ENCODE measurements at regions of chr11 and their contacts with region 1.

Region 1: DNA sequence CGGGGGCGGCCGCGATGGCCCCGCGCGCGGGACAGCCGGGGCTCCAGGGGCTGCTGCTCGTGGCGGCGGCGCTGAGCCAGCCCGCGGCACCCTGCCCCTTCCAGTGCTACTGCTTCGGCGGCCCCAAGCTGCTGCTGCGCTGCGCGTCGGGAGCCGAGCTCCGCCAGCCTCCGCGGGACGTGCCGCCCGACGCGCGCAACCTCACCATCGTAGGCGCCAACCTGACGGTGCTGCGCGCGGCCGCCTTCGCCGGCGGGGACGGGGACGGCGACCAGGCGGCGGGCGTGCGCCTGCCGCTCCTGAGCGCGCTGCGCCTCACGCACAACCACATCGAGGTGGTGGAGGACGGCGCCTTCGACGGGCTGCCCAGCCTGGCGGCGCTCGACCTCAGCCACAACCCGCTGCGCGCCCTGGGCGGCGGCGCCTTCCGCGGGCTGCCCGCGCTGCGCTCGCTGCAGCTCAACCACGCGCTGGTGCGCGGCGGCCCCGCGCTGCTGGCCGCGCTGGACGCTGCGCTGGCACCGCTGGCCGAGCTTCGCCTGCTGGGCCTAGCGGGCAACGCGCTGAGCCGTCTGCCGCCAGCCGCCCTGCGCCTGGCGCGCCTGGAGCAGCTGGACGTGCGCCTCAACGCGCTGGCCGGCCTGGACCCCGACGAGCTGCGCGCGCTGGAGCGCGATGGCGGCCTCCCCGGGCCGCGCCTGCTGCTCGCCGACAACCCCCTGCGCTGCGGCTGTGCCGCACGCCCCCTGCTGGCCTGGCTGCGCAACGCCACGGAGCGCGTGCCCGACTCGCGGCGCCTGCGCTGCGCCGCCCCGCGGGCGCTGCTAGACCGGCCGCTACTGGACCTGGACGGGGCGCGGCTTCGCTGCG is 697 bp downstream of the TPBGL start:
- DNase-seq: peak; percentile 71 to 95 (median 86)
- ATAC-seq: peak; percentile 98
- H3K4me3 ChIP-seq: peak overlapping the region; percentile 54
- H3K4me3 Mint-ChIP-seq: peak overlapping the region; percentile 59 to 85 (median 75)
- H3K27ac ChIP-seq: no peak overlapping the region
- H3K27ac Mint-ChIP-seq: no peak overlapping the region
- H3K4me1 ChIP-seq: peaks cover 5 to 15% of the 10 kb centered on the region in 2 donors
- H3K4me1 Mint-ChIP-seq: peaks cover 0 to 14% (median 10%) of the 10 kb centered on the region in 7 donors
- H3K27me3 ChIP-seq: peaks cover 3 to 5% of the 10 kb centered on the region in 2 donors
- H3K27me3 Mint-ChIP-seq: peaks cover 13 to 68% (median 27%) of the 10 kb centered on the region in 5 donors

Region 2: DNA sequence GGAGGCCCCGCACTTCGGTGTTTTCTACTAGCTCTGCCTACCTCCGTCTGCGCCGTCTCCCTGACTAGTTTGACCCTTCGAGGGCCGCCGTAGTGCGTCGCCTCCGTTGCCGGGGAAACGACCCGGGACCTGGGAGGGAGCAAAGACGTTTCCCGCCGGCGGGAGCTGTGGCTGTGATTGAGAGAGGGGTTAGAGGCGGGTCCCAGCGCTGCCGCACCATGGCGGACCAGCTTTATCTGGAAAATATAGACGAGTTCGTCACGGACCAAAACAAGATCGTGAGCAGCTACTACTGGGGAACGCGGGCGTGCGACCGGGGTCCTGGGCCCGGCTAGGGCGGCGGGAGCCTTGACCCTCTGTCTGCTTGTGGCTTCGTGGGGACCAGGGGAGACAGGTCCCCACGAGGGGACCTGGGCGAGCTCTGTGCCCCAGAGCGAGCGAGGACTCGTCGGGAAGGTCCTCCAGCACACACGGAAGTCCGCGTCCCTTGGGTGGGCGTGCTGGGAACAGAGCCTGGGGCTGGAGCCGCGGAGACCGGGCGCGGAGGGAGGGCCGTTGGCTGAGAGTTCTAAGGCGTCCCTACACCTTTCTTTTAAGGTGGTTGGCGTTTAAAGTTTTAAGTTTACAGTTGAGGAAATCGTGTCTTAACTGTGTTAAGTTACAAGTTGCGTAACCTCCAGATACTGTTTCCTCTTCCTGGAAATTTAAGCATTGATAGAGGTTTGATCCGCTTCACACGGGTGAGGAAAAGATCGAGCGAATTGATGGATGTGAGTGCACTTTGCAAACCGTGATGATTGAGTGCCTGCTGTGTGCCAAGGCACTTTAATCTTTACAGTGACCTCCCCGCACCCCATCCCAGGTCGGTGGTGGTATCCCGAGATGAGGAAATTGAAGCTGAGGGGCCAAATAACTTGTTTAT is 648.6 kb before region 1 on chr11 and contains the start of gene POLD3:
- CTCF ChIA-PET with region 1: no interaction called
- POLR2A ChIA-PET with region 1: no interaction called
- intact Hi-C with region 1: loop called in 1 of 2 experiments (anchors 10 kb)
- DNase-seq: peak; percentile 83 to 97 (median 94)
- ATAC-seq: peak; percentile 99
- H3K4me3 ChIP-seq: peak within 1 kb of the TSS; percentile 98
- H3K4me3 Mint-ChIP-seq: peak within 1 kb of the TSS; percentile 90 to 100 (median 92)
- H3K27ac ChIP-seq: peak within 1 kb of the TSS; percentile 96
- H3K27ac Mint-ChIP-seq: peak within 1 kb of the TSS; percentile 90 to 99 (median 95)
- H3K4me1 ChIP-seq: peaks cover 9% of the 10 kb centered on the region in 2 donors
- H3K4me1 Mint-ChIP-seq: peaks cover 7 to 33% (median 27%) of the 10 kb centered on the region in 7 donors
- H3K27me3 ChIP-seq: no peaks in the 10 kb centered on the region
- H3K27me3 Mint-ChIP-seq: peaks cover 0 to 5% (median 0%) of the 10 kb centered on the region in 5 donors
- total RNA-seq, gene POLD3: 8.0 to 40.8 (median 14.7) TPM

Region 3: GRCh38 chr11:74748211-74749127 is 492.8 kb before region 1 on chr11 and contains the start of gene RNF169:
- CTCF ChIA-PET with region 1: no interaction called
- POLR2A ChIA-PET with region 1: no interaction called
- intact Hi-C with region 1: loop called in 1 of 2 experiments (anchors 10 kb)
- DNase-seq: peak; percentile 59 to 88 (median 84)
- ATAC-seq: peak; percentile 100
- H3K4me3 ChIP-seq: peak within 1 kb of the TSS; percentile 73
- H3K4me3 Mint-ChIP-seq: peak within 1 kb of the TSS; percentile 81 to 99 (median 94)
- H3K27ac ChIP-seq: peak within 1 kb of the TSS; percentile 79
- H3K27ac Mint-ChIP-seq: peak within 1 kb of the TSS; percentile 84 to 97 (median 91)
- H3K4me1 ChIP-seq: peaks cover 16 to 29% of the 10 kb centered on the region in 2 donors
- H3K4me1 Mint-ChIP-seq: peaks cover 25 to 48% (median 42%) of the 10 kb centered on the region in 7 donors
- H3K27me3 ChIP-seq: no peaks in the 10 kb centered on the region
- H3K27me3 Mint-ChIP-seq: no peaks in the 10 kb centered on the region
- total RNA-seq, gene RNF169: 17.9 to 25.5 (median 22.2) TPM

Region 4: DNA sequence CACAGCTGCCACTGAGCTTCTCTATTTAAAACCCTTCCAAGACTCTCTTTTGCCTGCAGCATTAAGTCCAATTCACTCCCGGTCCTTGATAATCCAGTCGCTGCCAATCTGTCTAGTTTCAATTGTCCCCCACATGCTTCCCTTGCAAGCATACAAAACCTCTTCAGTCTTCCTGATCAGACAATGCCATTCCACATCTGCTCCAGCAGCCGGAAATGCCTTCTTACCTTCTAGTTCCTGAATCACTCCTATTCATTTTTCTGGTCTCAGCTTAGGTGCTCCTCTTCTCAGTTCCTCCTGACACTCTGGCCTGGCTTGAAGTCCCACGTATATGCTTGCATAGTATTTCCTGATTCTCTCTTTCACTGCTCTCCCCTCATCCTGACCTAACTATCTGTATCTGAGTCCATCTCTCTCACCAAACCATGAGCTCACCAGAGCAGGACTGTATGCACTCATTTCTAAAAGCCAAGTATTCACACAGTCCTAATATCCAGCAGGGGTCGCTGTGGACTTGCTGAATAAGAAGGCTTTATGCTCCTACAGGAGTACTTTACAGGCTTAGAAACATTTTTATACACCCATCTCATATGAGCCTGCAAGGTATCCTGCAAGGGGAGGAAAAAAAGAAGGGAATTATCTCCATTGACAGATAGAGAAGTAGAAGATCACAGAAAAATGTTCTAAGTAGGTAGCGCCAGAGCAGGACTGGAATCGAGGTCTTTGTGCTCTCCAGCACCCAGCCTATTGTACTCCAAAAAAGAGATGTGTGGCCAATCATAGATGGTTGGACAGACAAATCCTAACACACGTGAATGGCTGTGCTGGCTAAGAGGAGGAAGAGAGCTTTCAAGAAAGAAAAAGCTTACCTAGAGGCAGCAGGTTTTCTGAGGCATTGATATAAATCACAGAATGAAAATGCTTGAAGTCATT is 311.6 kb before region 1 on chr11:
- CTCF ChIA-PET with region 1: interaction called, 13 read pairs
- POLR2A ChIA-PET with region 1: no interaction called
- intact Hi-C with region 1: loop called in 1 of 2 experiments (anchors 2 kb)
- DNase-seq: peak; percentile 9 to 74 (median 59)
- ATAC-seq: peak; percentile 92
- H3K4me3 ChIP-seq: no peak overlapping the region
- H3K4me3 Mint-ChIP-seq: no peak overlapping the region
- H3K27ac ChIP-seq: no peak overlapping the region
- H3K27ac Mint-ChIP-seq: no peak overlapping the region
- H3K4me1 ChIP-seq: no peaks in the 10 kb centered on the region
- H3K4me1 Mint-ChIP-seq: peaks cover 0 to 36% (median 0%) of the 10 kb centered on the region in 7 donors
- H3K27me3 ChIP-seq: no peaks in the 10 kb centered on the region
- H3K27me3 Mint-ChIP-seq: no peaks in the 10 kb centered on the region

Region 5: DNA sequence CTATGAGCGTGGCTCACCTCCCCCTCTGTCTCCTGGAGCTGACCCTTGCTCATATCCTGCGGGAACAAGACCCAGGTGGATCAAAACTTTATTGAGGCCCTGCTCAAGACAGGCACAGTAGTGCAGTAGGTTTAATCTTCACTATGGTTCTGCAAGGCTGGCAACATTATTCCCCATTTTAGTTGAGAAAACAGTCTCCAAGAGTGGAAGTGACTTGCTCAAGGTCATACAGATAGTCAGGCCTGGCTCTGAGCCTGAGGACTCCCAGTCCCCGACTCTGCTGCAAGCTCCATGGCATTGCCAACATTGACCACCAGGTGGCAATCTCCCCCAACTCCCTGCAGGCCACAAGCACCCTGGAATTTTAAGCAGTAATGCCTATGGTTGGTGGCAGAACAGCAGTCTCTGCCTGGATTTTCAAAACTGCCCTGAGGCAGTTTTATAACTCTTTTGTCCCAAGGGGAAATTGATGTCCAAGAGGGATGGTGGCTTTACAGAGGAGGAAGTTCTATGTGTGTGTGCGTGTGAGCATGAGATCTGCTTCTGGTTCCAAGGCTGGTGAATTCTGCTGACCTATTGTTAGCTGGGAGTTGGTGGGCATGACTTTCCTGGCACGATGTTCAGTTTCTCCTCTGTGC is 218.4 kb before region 1 on chr11:
- CTCF ChIA-PET with region 1: interaction called, 4 read pairs
- POLR2A ChIA-PET with region 1: no interaction called
- intact Hi-C with region 1: loop called (anchors 2 kb)
- DNase-seq: peak; percentile 38 to 71 (median 66)
- ATAC-seq: peak; percentile 88
- H3K4me3 ChIP-seq: no peak overlapping the region
- H3K4me3 Mint-ChIP-seq: no peak overlapping the region
- H3K27ac ChIP-seq: no peak overlapping the region
- H3K27ac Mint-ChIP-seq: no peak overlapping the region
- H3K4me1 ChIP-seq: no peaks in the 10 kb centered on the region
- H3K4me1 Mint-ChIP-seq: no peaks in the 10 kb centered on the region
- H3K27me3 ChIP-seq: no peaks in the 10 kb centered on the region
- H3K27me3 Mint-ChIP-seq: no peaks in the 10 kb centered on the region

Region 6: DNA sequence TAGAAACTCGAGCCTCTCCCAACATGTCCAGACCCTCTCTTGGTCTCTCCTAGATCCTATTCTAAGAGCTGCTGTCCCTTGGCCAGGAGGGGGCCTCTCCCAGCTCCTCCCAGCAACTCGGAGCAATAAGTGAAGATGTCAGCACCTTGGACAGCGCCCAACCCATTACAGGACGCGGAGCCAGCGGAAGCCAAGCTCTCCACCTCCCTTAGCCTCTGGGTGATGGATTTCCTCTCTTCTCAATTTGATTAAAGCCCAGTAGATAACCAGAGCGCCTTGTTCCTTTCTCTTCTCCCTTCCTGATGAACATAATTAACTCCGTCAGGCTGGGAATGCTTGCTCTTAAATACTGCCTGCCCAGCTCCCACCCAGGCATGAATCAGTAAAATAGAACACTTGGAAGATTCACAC is 26.9 kb before region 1 on chr11:
- CTCF ChIA-PET with region 1: interaction called, 3 read pairs
- POLR2A ChIA-PET with region 1: no interaction called
- intact Hi-C with region 1: loop called in 1 of 2 experiments (anchors 1 kb)
- DNase-seq: peak; percentile 33 to 82 (median 68)
- ATAC-seq: peak; percentile 87
- H3K4me3 ChIP-seq: no peak overlapping the region
- H3K4me3 Mint-ChIP-seq: no peak overlapping the region
- H3K27ac ChIP-seq: no peak overlapping the region
- H3K27ac Mint-ChIP-seq: peak overlapping the region in 1 of 9 donors; percentile 9
- H3K4me1 ChIP-seq: no peaks in the 10 kb centered on the region
- H3K4me1 Mint-ChIP-seq: peaks cover 0 to 3% (median 0%) of the 10 kb centered on the region in 7 donors
- H3K27me3 ChIP-seq: no peaks in the 10 kb centered on the region
- H3K27me3 Mint-ChIP-seq: peaks cover 16 to 39% (median 30%) of the 10 kb centered on the region in 5 donors

Measured in naive thymus-derived CD4-positive, alpha-beta T cell (primary cell).